ENCODE measurements at regions of chr16 and their contacts with region 1.

Region 1: GRCh38 chr16:9286930-9287329 is 195.5 kb downstream of the HAPSTR1 start:
- DNase-seq: no peak
- H3K4me3 ChIP-seq: no peak overlapping the region
- H3K27ac ChIP-seq: no peak overlapping the region
- H3K4me1 ChIP-seq: no peaks in the 10 kb centered on the region
- H3K27me3 ChIP-seq: peaks cover 4% of the 10 kb centered on the region; the same call in 1 of the 2 replicates
- CTCF ChIP-seq: no peak

Region 2: GRCh38 chr16:8910811-8911210 is 376.1 kb before region 1 on chr16:
- CTCF ChIA-PET with region 1: no interaction called
- POLR2A ChIA-PET with region 1: interaction called, 22 read pairs
- intact Hi-C with region 1: no loop called
- DNase-seq: no peak
- H3K4me3 ChIP-seq: no peak overlapping the region
- H3K27ac ChIP-seq: peak overlapping the region; percentile 62
- H3K4me1 ChIP-seq: peaks cover 52% of the 10 kb centered on the region
- H3K27me3 ChIP-seq: no peaks in the 10 kb centered on the region
- CTCF ChIP-seq: no peak

Region 3: DNA sequence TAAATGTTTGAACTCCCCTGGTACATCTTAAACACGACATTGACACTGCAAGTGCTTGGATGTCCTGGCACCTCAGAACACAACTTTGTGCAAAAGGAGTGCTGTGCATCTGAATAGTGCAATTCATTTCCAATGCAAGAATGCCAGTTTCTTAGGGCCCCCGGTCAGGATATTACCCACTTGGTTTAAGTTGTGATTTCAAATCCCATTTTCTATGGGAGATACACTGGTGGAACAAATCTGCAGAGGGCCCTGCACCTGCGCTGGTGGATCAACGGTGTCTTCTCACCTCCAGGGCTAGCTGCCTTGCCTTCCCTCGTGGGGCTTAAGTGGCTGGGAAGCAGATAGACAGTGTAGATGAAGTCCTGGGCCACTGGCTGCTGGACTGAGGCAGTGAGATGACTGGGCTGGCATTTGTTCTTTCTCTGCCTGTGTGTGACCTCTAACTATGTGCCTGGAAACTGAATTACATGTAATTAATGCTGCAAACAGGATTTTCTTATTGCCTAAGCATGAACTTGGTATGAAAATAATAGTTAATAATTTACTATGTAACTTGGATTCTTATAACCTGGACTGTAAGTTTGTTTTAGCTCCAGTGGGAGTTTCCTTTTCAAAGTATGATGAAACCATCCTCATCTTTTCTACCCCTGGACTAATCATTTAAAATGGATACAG is 174.6 kb before region 1 on chr16:
- CTCF ChIA-PET with region 1: no interaction called
- POLR2A ChIA-PET with region 1: no interaction called
- intact Hi-C with region 1: no loop called
- DNase-seq: no peak
- H3K4me3 ChIP-seq: no peak overlapping the region
- H3K27ac ChIP-seq: peak overlapping the region; percentile 89
- H3K4me1 ChIP-seq: peaks cover 78% of the 10 kb centered on the region
- H3K27me3 ChIP-seq: no peaks in the 10 kb centered on the region
- CTCF ChIP-seq: no peak

Measured in PC-9 (cell line).